Activated B cell treated with CpG ODN at 0.5 μM for 24 hours (primary cell): ENCODE measurements at regions of chr18 and their contacts with region 1.

Region 1: GRCh38 chr18:23673725-23674124 is 11.0 kb upstream of the ANKRD29 start:
- DNase-seq: no peak
- ATAC-seq: no peak
- H3K4me3 Mint-ChIP-seq: no peak overlapping the region
- H3K27ac Mint-ChIP-seq: no peak overlapping the region
- H3K4me1 Mint-ChIP-seq: no peaks in the 10 kb centered on the region
- H3K27me3 Mint-ChIP-seq: peaks cover 14% of the 10 kb centered on the region
- CTCF ChIP-seq: no peak

Region 2: DNA sequence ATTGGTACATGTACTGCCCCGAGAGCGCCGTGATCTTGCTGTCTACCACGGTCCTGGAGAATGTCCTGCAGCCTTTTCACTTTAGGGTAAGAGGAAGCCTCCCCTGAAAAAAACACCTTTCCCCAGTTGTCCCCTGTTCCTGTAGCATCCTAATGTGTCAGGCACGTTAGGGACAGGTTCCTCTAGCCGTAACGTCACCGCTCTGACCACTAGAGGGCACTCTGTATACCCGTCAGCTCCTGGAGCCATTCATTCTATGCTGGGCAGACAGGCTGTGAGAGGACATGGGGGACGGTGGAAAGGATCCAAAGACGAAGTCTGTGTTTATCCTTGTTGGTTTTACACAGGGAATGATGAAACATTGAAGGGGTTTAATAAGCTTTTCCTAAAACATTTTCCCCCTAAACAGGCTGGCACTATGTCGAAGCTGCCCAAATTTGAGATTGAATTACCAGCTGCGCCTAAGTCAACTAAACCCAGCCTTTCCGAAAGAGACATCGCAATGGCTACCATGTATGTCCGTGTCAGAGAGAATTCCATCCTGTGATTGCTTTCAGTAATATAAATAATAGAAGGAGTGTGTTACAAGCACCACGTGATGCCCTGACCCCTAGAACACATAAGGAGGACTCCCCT is 157.7 kb before region 1 on chr18:
- CTCF ChIA-PET with region 1: no interaction called
- POLR2A ChIA-PET with region 1: no interaction called
- intact Hi-C with region 1: no loop called
- DNase-seq: peak; percentile 42
- ATAC-seq: peak; percentile 97
- H3K4me3 Mint-ChIP-seq: no peak overlapping the region
- H3K27ac Mint-ChIP-seq: peak overlapping the region; percentile 74
- H3K4me1 Mint-ChIP-seq: peaks cover 35% of the 10 kb centered on the region
- H3K27me3 Mint-ChIP-seq: no peaks in the 10 kb centered on the region
- CTCF ChIP-seq: peak; percentile 78

Region 3: DNA sequence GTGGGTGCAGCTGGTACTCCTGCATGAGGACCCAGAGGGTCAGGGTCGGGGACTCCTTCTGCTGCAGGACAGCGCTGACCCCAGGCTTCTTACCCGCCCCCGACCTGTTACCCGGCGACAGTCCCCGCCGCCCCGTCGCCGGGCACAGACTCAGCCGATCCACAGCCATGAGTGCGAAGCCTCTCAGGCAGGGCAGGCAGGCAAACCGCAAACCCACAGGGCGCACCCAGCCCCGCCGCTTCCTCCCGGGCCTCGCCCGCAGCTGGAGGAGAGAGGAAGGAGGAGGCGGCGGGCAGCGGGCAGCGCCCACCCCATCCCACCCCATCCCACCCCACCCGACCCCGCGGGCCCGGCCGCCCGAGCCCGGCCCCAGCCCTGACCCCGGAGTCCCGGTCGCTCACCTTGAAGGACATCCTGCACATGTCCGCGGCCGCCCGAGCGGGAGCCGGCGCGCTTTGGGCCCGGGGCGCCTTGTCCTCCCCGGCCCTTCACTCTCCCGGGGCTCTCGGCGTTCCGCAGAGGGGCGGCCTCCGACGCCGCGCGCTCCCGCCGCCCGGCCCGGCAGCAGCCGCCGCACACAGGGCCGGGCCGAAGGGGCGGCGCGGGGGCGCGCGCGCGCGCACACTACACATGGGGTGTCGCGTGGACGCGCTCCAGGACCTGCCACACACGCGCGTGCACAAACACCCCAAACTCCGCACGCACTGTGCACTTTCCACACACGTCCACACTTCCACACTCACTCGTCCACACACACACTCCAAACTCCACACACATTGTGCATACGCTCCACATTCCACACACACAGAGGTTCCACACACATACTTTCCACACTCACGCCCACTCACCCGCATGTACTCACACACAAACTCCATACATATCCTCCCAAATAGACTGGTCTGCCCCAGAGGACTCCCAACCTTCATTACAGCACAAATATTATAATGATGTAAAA is 11.1 kb before region 1 on chr18 and contains the start of gene ANKRD29:
- CTCF ChIA-PET with region 1: no interaction called
- POLR2A ChIA-PET with region 1: no interaction called
- intact Hi-C with region 1: no loop called
- DNase-seq: peak; percentile 18
- ATAC-seq: peak; percentile 57
- H3K4me3 Mint-ChIP-seq: peak within 1 kb of the TSS; percentile 78
- H3K27ac Mint-ChIP-seq: no peak within 1 kb of the TSS
- H3K4me1 Mint-ChIP-seq: peaks cover 15% of the 10 kb centered on the region
- H3K27me3 Mint-ChIP-seq: peaks cover 44% of the 10 kb centered on the region
- CTCF ChIP-seq: no peak
- total RNA-seq, gene ANKRD29: not detected in 2 replicates

Region 4: GRCh38 chr18:23693845-23694244 is 20.1 kb after region 1 on chr18:
- CTCF ChIA-PET with region 1: no interaction called
- POLR2A ChIA-PET with region 1: no interaction called
- intact Hi-C with region 1: loop called (anchors 2 kb)
- DNase-seq: no peak
- ATAC-seq: no peak
- H3K4me3 Mint-ChIP-seq: no peak overlapping the region
- H3K27ac Mint-ChIP-seq: no peak overlapping the region
- H3K4me1 Mint-ChIP-seq: peaks cover 10% of the 10 kb centered on the region
- H3K27me3 Mint-ChIP-seq: peaks cover 22% of the 10 kb centered on the region
- CTCF ChIP-seq: no peak